Caco-2 (cell line): ENCODE measurements at regions of chr16 and their contacts with region 1.

Region 1: DNA sequence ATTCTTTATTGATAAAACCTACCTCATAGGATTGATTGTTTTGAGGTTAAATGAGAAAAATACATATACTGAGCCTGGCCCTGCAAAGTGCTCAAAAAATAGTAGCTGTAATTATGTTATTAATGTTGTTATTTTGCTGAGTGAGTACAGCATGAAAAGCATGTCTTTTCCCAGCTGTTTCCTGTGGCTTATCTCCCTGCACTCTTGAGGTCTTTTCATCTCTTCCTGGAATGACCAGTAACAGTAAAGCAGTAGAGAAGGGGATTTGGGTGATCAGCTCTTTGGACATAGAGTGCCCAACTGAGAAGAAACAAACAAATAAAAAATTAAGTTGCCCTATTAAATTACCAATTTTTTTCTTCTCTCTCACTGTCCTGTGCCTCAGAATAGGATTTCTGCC is 53.7 kb downstream of the NFAT5 start:
- DNase-seq: no peak
- H3K4me3 ChIP-seq: no peak overlapping the region
- H3K4me3 Mint-ChIP-seq: peak overlapping the region; percentile 43
- H3K27ac Mint-ChIP-seq: peak overlapping the region; percentile 54
- H3K4me1 ChIP-seq: peaks cover 57% of the 10 kb centered on the region
- H3K4me1 Mint-ChIP-seq: peaks cover 53% of the 10 kb centered on the region
- H3K27me3 ChIP-seq: no peaks in the 10 kb centered on the region
- H3K27me3 Mint-ChIP-seq: no peaks in the 10 kb centered on the region
- CTCF ChIP-seq: no peak

Region 2: DNA sequence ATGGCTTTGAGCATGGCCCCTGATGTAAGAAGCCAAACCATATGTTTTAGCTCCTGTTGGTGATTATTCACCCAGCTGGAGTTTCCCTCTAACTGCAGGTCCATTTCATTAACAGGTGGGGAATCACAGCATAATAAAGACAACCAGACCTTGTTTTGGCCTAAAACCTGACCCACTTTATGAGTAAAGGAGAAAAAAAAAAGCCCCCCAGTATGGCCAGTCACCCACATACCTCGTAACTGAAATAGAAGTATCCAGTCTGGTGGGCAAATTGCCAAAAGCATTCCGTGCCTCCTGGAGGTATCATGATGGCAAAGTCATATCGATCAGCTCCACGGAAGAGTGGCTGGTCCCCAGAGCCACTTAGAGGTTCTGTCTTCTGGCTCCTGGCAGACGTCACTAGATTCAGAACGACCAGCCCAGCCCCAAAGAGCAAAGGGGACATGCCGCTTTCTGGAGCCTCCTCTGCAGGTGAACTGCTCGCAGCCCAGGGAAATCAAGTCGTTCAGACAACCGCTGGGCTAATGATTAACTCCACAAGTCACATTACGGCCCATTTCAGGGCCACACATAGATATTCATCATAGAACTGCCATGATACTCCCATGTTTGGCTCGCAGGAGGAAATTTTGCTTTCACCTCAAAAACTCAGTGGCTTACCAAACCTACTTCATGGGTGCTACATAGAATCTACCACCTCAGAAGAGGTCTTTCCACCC is 268.0 kb before region 1 on chr16 and contains the start of gene TMED6:
- CTCF ChIA-PET with region 1: no interaction called
- POLR2A ChIA-PET with region 1: no interaction called
- intact Hi-C with region 1: no loop called
- DNase-seq: peak; percentile 67 to 76
- H3K4me3 ChIP-seq: 0 out of 2 replicates have a peak within 1 kb of the TSS, but pooled peaks have one; percentile 11
- H3K4me3 Mint-ChIP-seq: peak within 1 kb of the TSS; percentile 12
- H3K27ac Mint-ChIP-seq: peak within 1 kb of the TSS; percentile 9
- H3K4me1 ChIP-seq: peaks cover 12% of the 10 kb centered on the region
- H3K4me1 Mint-ChIP-seq: peaks cover 13% of the 10 kb centered on the region
- H3K27me3 ChIP-seq: no peaks in the 10 kb centered on the region
- H3K27me3 Mint-ChIP-seq: no peaks in the 10 kb centered on the region
- CTCF ChIP-seq: no peak
- total RNA-seq, gene TMED6: 2.4 TPM in 2 replicates

Region 3: GRCh38 chr16:69633375-69633774 is 13.9 kb after region 1 on chr16:
- CTCF ChIA-PET with region 1: no interaction called
- POLR2A ChIA-PET with region 1: interaction called, 11 read pairs
- intact Hi-C with region 1: no loop called
- DNase-seq: no peak
- H3K4me3 ChIP-seq: no peak overlapping the region
- H3K4me3 Mint-ChIP-seq: no peak overlapping the region
- H3K27ac Mint-ChIP-seq: no peak overlapping the region
- H3K4me1 ChIP-seq: no peaks in the 10 kb centered on the region
- H3K4me1 Mint-ChIP-seq: no peaks in the 10 kb centered on the region
- H3K27me3 ChIP-seq: no peaks in the 10 kb centered on the region
- H3K27me3 Mint-ChIP-seq: no peaks in the 10 kb centered on the region
- CTCF ChIP-seq: no peak

Region 4: DNA sequence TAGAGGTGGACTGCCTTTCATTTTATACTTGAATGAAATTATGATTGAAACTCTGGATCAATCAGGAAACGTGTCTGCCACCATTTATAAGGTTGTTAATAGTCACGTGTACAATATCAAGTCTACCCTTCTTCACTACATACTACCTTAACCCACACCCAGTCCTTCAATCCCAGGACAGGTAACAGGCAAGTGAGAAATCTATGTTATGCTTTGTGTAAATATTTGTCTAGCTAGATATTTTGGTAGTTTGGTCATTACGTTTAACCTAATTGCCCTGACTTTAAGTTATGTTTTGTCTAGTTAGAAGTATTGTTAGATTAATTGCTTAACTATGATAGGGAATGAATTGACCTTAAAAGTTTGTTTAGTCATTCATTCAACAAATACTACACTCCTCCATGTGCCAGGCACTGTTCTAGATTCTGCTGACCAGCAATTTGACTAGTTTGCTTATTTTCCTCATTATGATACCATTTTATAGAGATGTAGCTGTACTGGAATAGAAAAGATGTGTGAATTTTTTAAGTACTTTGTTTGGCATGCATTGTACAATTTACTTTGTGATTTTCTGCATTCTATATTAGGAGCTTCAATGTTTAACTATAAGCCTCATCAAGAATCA is 34.9 kb after region 1 on chr16:
- CTCF ChIA-PET with region 1: no interaction called
- POLR2A ChIA-PET with region 1: no interaction called
- intact Hi-C with region 1: loop called (anchors 1 kb)
- DNase-seq: no peak
- H3K4me3 ChIP-seq: no peak overlapping the region
- H3K4me3 Mint-ChIP-seq: no peak overlapping the region
- H3K27ac Mint-ChIP-seq: no peak overlapping the region
- H3K4me1 ChIP-seq: peaks cover 16% of the 10 kb centered on the region
- H3K4me1 Mint-ChIP-seq: peaks cover 26% of the 10 kb centered on the region
- H3K27me3 ChIP-seq: no peaks in the 10 kb centered on the region
- H3K27me3 Mint-ChIP-seq: no peaks in the 10 kb centered on the region
- CTCF ChIP-seq: no peak

Region 5: GRCh38 chr16:69672998-69673713 is 53.6 kb after region 1 on chr16:
- CTCF ChIA-PET with region 1: no interaction called
- POLR2A ChIA-PET with region 1: no interaction called
- intact Hi-C with region 1: no loop called
- DNase-seq: no peak
- H3K4me3 ChIP-seq: no peak overlapping the region
- H3K4me3 Mint-ChIP-seq: no peak overlapping the region
- H3K27ac Mint-ChIP-seq: peak overlapping the region; percentile 10
- H3K4me1 ChIP-seq: peaks cover 47% of the 10 kb centered on the region
- H3K4me1 Mint-ChIP-seq: peaks cover 10% of the 10 kb centered on the region
- H3K27me3 ChIP-seq: no peaks in the 10 kb centered on the region
- H3K27me3 Mint-ChIP-seq: no peaks in the 10 kb centered on the region
- CTCF ChIP-seq: no peak